A549 (cell line): ENCODE measurements at regions of chr3 and their contacts with region 1.

Region 1: DNA sequence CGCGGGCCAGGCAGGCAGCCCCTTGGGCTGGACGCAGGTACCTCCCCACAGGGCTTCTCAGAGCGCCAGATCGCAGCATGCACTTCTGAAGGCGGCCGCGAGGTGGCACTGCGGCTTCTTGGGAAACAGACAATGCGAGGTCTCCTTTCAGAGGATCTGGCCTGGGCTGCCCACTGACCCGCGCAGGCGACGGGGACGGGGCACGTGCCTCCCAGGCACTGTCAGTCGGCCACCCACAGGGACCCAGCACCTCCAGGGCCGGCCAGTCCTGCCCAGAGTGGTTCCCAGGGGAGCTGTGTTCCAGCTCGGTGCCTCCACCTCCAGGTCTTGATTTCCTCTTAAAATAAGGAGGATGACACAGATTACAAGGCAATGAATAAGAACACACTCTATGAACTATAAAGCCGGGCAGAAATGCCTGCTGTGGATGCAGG is 24.4 kb upstream of the TXNRD3 start:
- DNase-seq: peak; percentile 61 to 70
- ATAC-seq: peak; percentile 95 to 99
- H3K4me3 ChIP-seq: no peak overlapping the region
- H3K27ac ChIP-seq: peak overlapping the region in 1 of 2 experiments; percentile 66; a peak in 2 of 6 replicates
- H3K4me1 ChIP-seq: no peaks in the 10 kb centered on the region
- CTCF ChIP-seq: peak; percentile 69
- EP300 ChIP-seq: no peak
- POLR2A ChIP-seq: no peak
- RAD21 ChIP-seq: peak; percentile 74 to 86

Region 2: DNA sequence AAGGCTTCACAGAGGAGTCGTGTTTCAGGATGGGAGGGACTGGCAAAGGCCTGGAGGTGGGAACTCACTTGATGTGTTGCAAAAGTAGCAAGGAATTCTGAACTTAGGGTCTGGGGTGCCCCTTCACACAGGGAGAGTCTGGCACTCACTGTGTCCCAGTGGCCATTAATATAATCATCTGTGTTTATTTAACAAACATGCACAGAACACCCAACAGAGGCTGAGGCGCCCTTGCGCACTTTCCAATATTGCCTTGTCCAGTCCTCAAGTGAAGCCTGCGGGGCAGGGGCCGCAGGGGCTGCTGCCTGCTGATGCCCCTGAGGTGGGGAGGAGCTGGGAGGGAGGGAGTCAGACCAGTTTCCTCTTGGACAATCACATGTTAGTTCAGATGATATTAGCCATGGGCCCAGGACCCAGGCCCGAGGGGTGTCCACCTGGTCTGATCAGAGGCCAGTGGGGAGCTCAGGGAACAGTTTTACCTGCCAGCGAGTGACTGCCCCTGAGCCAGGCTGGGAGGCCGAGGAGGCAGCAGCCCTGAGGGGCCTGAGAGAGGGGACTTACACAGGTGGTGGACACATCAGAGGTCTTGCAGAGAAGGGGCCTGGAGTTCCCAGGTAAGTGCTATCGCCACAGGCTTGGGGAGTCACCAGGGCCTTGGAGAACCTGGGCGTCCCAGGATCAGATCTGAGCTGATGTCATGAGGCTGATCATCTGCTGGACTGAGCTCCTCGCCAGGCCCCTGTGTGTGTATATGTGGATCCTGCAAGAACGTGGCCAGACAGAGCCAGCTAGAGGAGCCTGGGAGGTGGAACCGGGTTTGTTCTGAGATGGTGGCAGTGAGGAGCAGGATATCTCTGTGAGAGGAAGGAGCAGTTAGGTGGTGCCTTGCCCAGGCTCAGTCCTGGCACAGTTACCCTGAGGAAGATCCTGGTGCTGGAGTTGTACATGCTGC is 10.6 kb before region 1 on chr3:
- CTCF ChIA-PET with region 1: interaction called, 13 read pairs
- POLR2A ChIA-PET with region 1: no interaction called
- DNase-seq: no peak
- ATAC-seq: no peak; a peak in 1 of 6 replicates
- H3K4me3 ChIP-seq: no peak overlapping the region
- H3K27ac ChIP-seq: no peak overlapping the region
- H3K4me1 ChIP-seq: no peaks in the 10 kb centered on the region
- CTCF ChIP-seq: no peak
- EP300 ChIP-seq: no peak
- POLR2A ChIP-seq: no peak
- RAD21 ChIP-seq: no peak

Region 3: DNA sequence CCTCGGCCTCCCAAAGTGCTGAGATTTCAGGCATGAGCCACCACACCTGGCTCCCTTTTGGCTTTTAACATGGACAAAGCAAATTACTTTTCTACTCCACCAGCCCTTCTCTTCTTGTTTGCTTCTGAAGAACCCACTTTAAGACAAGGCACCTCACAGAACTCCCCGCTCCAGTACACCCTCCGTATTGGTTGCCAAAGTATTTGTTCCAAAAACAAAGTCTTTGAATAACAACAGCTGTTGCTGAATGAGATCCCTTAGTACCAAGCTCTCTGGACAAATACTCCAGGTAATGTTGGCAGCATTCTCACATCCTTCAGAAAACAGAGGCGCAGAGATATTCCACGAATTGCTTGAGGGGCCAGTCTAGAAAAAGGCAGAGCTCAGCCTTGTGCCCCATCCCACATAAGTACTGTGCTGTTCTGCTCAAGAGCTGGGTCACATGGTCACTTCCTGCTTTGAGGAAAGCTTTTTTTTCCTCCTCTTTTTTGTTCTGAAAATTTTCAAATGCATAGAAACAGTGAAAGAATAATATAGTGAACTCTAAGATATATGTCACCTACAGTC is 17.4 kb after region 1 on chr3:
- CTCF ChIA-PET with region 1: interaction called, 12 read pairs
- POLR2A ChIA-PET with region 1: no interaction called
- DNase-seq: no peak
- ATAC-seq: no peak
- H3K4me3 ChIP-seq: no peak overlapping the region
- H3K27ac ChIP-seq: no peak overlapping the region
- H3K4me1 ChIP-seq: no peaks in the 10 kb centered on the region
- CTCF ChIP-seq: no peak
- EP300 ChIP-seq: no peak
- POLR2A ChIP-seq: no peak
- RAD21 ChIP-seq: no peak

Region 4: DNA sequence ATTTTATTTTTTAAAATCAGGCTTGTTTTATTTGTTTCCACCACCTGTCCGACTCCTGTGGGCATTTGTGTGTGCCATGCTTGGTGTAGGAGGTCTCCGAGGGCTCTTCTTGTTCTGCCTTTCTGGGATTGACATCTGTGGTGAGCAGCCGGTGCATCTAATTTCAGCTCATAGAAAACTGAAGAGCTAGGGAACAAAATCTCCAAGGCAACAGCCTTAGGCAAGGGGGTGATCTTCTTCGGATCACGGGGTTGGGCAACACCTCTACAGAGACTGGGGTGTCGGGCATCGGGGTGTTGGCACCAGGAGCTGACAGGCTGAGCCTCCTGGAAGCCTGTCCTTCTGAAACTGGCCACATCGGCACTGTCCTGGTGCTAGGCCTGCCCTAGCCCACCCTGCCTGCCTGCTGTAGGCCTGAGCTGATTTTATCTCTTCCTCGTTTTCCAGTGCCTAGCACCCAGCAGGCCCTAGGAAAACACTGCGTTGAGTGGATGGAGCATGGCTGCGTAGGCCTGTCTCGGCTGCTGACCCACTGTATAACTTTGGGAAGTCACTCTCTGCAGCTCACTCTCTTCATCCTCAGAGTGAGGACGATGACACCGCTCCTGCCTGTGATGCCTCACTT is 35.1 kb after region 1 on chr3:
- CTCF ChIA-PET with region 1: interaction called, 11 read pairs
- POLR2A ChIA-PET with region 1: no interaction called
- DNase-seq: no peak
- ATAC-seq: no peak
- H3K4me3 ChIP-seq: no peak overlapping the region
- H3K27ac ChIP-seq: no peak overlapping the region
- H3K4me1 ChIP-seq: no peaks in the 10 kb centered on the region
- CTCF ChIP-seq: no peak
- EP300 ChIP-seq: no peak
- POLR2A ChIP-seq: no peak
- RAD21 ChIP-seq: no peak

Region 5: DNA sequence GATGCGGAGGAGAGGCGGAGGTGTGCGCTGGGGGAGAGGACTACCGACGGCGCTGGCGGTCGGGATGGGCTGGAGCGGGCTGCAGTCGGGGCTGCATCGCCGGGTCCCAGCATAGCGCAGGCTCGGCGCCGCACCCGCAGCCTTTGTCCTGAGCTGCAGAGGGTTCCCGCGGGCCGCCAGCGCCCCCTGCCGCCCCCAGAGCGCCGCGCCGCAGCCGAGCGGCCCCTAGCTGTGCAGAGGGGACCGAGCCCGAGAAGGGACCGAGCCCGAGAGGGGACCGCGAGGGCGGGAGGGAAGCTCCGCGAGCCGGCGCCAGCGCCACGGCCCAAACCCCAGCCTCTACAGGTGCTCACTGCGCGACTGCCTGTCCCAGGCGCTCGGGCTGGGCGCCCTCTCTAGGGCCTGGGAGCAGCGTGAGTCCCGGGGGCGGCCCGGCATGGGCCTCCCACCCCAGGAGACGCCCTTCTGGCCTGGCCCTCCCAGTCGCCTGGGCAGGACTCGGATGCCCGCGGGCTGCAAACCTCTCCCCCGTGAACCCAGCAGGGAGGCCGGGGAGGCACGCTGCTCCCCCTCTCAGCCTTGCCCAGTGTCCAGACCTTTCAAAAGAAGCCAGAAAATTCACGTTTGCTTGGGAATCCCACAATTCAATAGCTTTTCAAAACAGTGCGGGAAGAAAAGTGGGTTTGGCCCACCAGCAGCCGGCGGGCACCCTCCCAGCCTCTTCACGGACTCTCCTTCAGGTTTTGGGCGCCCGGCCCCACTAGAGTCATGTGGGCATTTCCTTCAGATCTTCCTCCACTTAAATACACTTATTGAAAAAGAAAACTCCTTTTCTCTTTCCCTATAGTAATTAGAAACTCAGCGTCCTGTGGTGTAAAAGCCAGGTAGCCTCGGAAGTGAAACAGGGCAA is 776.5 kb after region 1 on chr3:
- CTCF ChIA-PET with region 1: interaction called, 49 read pairs
- POLR2A ChIA-PET with region 1: no interaction called
- DNase-seq: peak; percentile 45 to 79
- ATAC-seq: peak; percentile 93 to 99
- H3K4me3 ChIP-seq: peak overlapping the region; percentile 32; the same call in 2 of the 3 replicates
- H3K27ac ChIP-seq: peak overlapping the region; percentile 40 to 74; a peak in 4 of 6 replicates
- H3K4me1 ChIP-seq: no peaks in the 10 kb centered on the region
- CTCF ChIP-seq: peak; percentile 88
- EP300 ChIP-seq: no peak
- POLR2A ChIP-seq: no peak
- RAD21 ChIP-seq: peak; percentile 72 to 95

Region 6: DNA sequence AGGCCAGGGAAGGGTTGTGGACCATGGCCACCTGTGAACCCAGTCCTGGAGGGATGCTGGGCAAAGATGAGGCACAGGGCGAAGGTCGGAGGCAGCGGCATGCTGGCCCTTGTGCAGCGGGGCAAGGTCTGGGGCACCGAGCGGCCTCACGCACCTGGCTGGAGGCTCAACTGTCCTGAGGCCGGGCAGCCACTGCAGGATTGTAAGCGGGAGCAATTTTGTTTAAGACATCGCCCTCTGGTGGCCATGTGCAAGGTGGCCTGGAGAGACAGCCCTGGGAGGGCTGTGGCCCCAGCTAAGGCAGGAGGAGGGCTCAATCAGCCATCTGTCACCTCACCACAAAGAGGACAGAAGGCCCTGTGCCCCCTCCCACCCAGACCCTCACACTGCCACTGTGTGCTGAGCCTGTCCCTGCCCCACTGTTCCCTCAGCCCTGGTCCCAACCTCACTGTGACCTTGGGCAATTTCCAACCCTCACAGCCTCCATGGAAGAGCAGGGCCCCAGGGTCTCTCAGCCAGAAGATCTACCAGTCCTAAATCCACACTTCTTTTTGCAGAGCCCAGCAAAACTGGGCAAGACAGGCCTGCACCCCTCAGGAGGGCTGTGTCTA is 865.0 kb after region 1 on chr3:
- CTCF ChIA-PET with region 1: interaction called, 68 read pairs
- POLR2A ChIA-PET with region 1: no interaction called
- DNase-seq: peak; percentile 70 to 86
- ATAC-seq: peak; percentile 81 to 89
- H3K4me3 ChIP-seq: no peak overlapping the region
- H3K27ac ChIP-seq: no peak overlapping the region; a peak in 1 of 6 replicates
- H3K4me1 ChIP-seq: peaks cover 7% of the 10 kb centered on the region; the same call in 1 of the 3 replicates
- CTCF ChIP-seq: peak; percentile 64
- EP300 ChIP-seq: no peak
- POLR2A ChIP-seq: no peak
- RAD21 ChIP-seq: peak; percentile 66 to 71